Motor neuron (in vitro differentiated cells): ENCODE measurements at regions of chrX and their contacts with region 1.

Region 1: DNA sequence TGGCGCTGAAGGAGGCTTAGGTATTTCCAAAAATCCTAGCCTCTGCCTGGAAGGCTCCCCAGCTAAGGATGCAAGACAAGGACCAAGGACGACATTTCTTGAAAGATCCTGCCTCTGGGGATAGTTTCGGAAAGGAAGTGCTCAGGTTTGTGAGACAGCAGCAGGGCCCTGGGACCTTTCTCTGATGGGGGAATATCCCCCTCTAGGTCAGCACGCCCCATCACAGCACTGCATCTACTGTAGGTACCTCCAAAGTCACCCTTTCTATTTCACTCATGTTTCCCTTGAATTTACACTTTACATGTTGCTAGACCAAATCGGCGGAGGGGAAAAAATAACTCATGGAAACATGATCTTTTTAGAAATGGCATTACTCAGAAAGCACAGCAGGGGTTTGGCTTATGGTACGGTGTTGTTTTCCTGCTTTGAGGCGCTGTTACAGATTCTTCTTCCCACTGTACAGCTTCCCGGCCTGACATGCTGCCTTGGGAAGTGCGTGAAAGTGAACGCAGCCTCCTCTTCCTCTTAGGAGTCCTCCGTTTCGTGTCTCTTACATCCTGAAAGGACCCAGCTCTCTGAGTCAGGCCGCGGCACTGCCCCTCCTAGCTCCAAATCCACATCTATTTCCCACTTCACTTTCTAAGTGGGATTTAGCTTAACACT is 77.2 kb upstream of the DHRSX start:
- ATAC-seq: no peak
- H3K4me3 ChIP-seq: no peak overlapping the region
- H3K27ac ChIP-seq: no peak overlapping the region
- H3K4me1 ChIP-seq: peaks cover 0 to 13% of the 10 kb centered on the region in 2 donors

Region 2: DNA sequence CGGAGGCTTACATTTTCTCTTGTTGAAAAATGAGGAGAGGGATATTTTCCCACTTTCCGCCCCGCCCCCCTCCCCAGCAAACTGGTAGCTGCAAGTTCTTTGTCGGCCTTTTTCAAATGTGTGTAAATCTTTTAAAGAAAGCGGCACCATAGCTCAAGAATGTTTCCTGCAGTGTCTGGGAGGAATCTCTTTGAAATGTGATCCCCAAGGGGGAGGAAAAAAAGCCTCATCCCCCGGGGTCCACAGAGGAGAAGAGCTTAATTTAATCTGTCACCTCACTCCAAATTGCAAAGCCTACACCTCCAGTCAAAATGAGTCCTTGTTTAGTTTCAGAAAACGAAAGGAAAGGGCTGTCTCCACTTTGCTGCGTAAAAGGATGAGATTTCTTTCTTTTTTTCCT is 928.4 kb before region 1 on chrX:
- in situ Hi-C with region 1: loop called in 4 of 9 experiments (anchors 25 kb)
- ATAC-seq: peak in 2 of 8 experiments; percentile 35 to 61
- H3K4me3 ChIP-seq: no peak overlapping the region
- H3K27ac ChIP-seq: no peak overlapping the region
- H3K4me1 ChIP-seq: peaks cover 0 to 6% of the 10 kb centered on the region in 2 donors